ENCODE measurements at regions of chr12 and their contacts with region 1.

Region 1: DNA sequence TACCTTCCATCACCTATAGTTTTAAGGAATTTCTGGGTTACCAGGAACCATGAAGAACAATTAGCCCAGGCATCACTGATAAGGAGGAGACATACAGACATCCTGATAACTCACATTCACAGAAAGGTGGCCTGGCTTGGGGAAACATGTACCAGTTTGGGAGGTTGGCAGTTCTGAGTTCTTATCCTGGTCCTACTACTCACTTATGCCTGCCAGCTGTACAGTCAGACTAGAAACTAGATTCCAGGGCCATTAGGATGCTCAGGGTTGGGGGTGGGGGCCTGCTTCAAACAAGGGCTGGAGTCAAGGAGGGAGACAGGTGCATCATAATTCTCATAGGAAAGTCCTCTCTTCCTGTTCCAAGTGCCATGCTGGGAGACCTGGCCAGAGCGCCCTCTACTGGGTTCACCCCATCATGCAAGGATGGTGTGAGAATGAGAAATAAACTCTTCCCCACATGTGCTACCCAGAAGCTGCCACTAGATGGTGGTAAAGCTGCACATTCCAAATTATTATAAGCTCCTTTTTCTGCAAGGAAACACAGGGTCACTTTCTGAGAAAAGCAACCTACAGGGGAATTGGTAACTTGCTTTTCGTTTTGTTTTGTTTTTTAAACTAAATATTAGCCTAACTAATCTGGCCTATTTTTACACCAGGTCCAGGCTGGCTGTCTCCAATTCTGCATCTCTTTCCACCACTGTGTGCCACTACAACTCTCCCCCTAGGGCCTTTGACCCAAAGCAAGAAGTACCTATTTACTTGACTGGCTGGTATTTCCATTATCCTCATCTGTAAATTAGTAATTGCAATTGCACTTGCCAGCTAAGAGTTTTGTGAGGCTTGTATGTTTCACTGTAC is 14.5 kb downstream of the OAS2 start:
- DNase-seq: no peak
- ATAC-seq: peak; percentile 74
- H3K4me3 ChIP-seq: no peak overlapping the region
- H3K27ac ChIP-seq: no peak overlapping the region
- H3K4me1 ChIP-seq: no peaks in the 10 kb centered on the region
- H3K27me3 ChIP-seq: no peaks in the 10 kb centered on the region
- CTCF ChIP-seq: peak; percentile 81 to 99 (median 83); a peak in 5 of 6 replicates
- EP300 ChIP-seq: no peak
- POLR2A ChIP-seq: no peak
- RAD21 ChIP-seq: peak; percentile 81

Region 2: GRCh38 chr12:112906712-112907414 is 85.9 kb before region 1 on chr12 and contains the start of gene OAS1:
- CTCF ChIA-PET with region 1: interaction called, 35 read pairs
- POLR2A ChIA-PET with region 1: interaction called, 3 read pairs
- RAD21 ChIA-PET with region 1: interaction called, 19 read pairs
- SMC1A ChIA-PET with region 1: interaction called, 4 read pairs
- in situ Hi-C with region 1: no loop called
- intact Hi-C with region 1: loop called (anchors 5 kb)
- DNase-seq: peak; percentile 89
- ATAC-seq: peak; percentile 87
- H3K4me3 ChIP-seq: peak within 1 kb of the TSS; percentile 85
- H3K27ac ChIP-seq: peak within 1 kb of the TSS; percentile 93
- H3K4me1 ChIP-seq: peaks cover 22% of the 10 kb centered on the region
- H3K27me3 ChIP-seq: no peaks in the 10 kb centered on the region
- CTCF ChIP-seq: no peak
- EP300 ChIP-seq: no peak
- POLR2A ChIP-seq: peak; percentile 85
- RAD21 ChIP-seq: no peak
- polyA plus RNA-seq, gene OAS1: 88.9 to 117 TPM

Region 3: DNA sequence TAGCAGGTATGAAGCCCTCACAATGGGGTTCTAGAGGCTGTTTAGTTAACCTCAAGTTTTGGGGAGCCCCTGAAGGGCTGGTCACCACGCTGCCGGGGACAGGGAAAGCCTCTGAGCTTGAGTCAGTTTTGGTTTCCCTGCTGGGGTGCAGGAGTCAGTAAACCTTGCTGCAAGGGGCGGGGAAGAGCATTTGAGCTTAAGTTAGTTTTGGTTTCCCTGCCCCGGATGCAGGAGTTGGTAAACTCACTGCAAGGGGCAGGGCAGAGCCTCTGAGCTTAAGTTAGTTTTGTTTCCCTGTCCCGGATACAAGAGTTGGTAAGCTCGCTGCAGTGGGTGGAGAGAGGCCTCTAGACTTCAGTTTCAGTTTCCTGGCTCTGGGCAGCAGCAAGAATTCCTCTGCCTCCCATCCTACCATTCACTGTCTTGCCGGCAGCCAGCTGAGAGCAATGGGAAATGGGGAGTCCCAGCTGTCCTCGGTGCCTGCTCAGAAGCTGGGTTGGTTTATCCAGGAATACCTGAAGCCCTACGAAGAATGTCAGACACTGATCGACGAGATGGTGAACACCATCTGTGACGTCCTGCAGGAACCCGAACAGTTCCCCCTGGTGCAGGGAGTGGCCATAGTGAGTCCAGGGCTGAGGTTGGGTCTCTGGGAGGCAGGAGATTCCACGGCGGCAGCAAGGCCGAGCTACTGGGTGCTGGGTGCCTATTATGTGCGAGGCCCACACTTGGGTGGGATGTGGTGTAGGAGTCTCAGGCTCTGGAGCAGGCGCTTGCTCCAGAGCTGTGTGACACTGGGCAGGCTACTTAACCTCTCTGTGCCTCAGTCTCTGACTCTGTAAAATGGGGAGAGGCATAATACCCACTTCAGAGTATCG is 14.4 kb before region 1 on chr12 and contains the start of gene OAS2:
- CTCF ChIA-PET with region 1: interaction called, 45 read pairs
- POLR2A ChIA-PET with region 1: interaction called, 11 read pairs
- RAD21 ChIA-PET with region 1: interaction called, 22 read pairs
- SMC1A ChIA-PET with region 1: interaction called, 20 read pairs
- in situ Hi-C with region 1: no loop called
- intact Hi-C with region 1: no loop called
- DNase-seq: peak; percentile 94
- ATAC-seq: peak; percentile 92
- H3K4me3 ChIP-seq: peak within 1 kb of the TSS; percentile 97
- H3K27ac ChIP-seq: peak within 1 kb of the TSS; percentile 100
- H3K4me1 ChIP-seq: peaks cover 13% of the 10 kb centered on the region
- H3K27me3 ChIP-seq: no peaks in the 10 kb centered on the region
- CTCF ChIP-seq: no peak
- EP300 ChIP-seq: peak in 1 of 2 experiments; percentile 11; a peak in 1 of 4 replicates
- POLR2A ChIP-seq: peak; percentile 88
- RAD21 ChIP-seq: no peak
- polyA plus RNA-seq, gene OAS2: 32.4 to 43.4 TPM

Region 4: GRCh38 chr12:113005754-113006153 is 13.0 kb after region 1 on chr12:
- CTCF ChIA-PET with region 1: interaction called, 14 read pairs
- POLR2A ChIA-PET with region 1: no interaction called
- RAD21 ChIA-PET with region 1: interaction called, 3 read pairs
- SMC1A ChIA-PET with region 1: interaction called, 7 read pairs
- in situ Hi-C with region 1: no loop called
- intact Hi-C with region 1: no loop called
- DNase-seq: no peak
- ATAC-seq: no peak
- H3K4me3 ChIP-seq: no peak overlapping the region
- H3K27ac ChIP-seq: no peak overlapping the region
- H3K4me1 ChIP-seq: no peaks in the 10 kb centered on the region
- H3K27me3 ChIP-seq: no peaks in the 10 kb centered on the region
- CTCF ChIP-seq: peak; percentile 13 to 38 (median 20); a peak in 2 of 6 replicates
- EP300 ChIP-seq: no peak
- POLR2A ChIP-seq: no peak
- RAD21 ChIP-seq: 0 out of 2 replicates have a peak, but pooled peaks have one; percentile 22

Region 5: GRCh38 chr12:113030875-113031525 is 38.2 kb after region 1 on chr12:
- CTCF ChIA-PET with region 1: interaction called, 36 read pairs
- POLR2A ChIA-PET with region 1: no interaction called
- RAD21 ChIA-PET with region 1: interaction called, 11 read pairs
- SMC1A ChIA-PET with region 1: interaction called, 14 read pairs
- in situ Hi-C with region 1: no loop called
- intact Hi-C with region 1: loop called (anchors 2 kb)
- DNase-seq: no peak
- ATAC-seq: peak; percentile 84
- H3K4me3 ChIP-seq: no peak overlapping the region
- H3K27ac ChIP-seq: no peak overlapping the region
- H3K4me1 ChIP-seq: no peaks in the 10 kb centered on the region
- H3K27me3 ChIP-seq: no peaks in the 10 kb centered on the region
- CTCF ChIP-seq: peak; percentile 65 to 67 (median 65)
- EP300 ChIP-seq: no peak
- POLR2A ChIP-seq: no peak
- RAD21 ChIP-seq: peak; percentile 75

Region 6: DNA sequence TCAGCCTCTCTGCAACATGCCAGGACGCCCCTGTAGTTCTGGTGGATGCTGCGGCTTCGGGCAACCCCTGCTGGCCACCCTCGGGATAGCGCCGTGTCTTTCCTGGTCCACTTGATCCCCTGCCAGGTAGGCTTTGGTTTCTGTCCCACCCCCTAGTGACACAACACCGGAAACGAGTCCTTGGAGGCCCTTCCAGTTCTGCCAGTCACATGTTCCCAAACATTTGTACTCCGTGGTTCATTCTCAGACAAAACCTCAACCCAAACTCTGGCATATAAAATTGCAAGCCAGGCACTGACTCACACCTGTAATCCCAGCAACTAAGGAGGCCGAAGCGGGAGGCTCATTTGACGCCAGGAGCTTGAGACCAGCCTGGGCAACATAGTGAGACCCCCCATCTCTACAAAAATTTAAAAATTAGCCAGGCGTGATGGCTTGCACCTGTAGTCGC is 105.7 kb after region 1 on chr12:
- CTCF ChIA-PET with region 1: interaction called, 13 read pairs
- POLR2A ChIA-PET with region 1: no interaction called
- RAD21 ChIA-PET with region 1: interaction called, 3 read pairs
- SMC1A ChIA-PET with region 1: interaction called, 6 read pairs
- in situ Hi-C with region 1: no loop called
- intact Hi-C with region 1: loop called (anchors 5 kb)
- DNase-seq: no peak
- ATAC-seq: peak; percentile 91
- H3K4me3 ChIP-seq: no peak overlapping the region
- H3K27ac ChIP-seq: no peak overlapping the region
- H3K4me1 ChIP-seq: peaks cover 10% of the 10 kb centered on the region; the same call in 1 of the 2 replicates
- H3K27me3 ChIP-seq: no peaks in the 10 kb centered on the region
- CTCF ChIP-seq: peak; percentile 95 to 98 (median 97); a peak in 5 of 6 replicates
- EP300 ChIP-seq: no peak
- POLR2A ChIP-seq: no peak
- RAD21 ChIP-seq: peak; percentile 93

Region 7: DNA sequence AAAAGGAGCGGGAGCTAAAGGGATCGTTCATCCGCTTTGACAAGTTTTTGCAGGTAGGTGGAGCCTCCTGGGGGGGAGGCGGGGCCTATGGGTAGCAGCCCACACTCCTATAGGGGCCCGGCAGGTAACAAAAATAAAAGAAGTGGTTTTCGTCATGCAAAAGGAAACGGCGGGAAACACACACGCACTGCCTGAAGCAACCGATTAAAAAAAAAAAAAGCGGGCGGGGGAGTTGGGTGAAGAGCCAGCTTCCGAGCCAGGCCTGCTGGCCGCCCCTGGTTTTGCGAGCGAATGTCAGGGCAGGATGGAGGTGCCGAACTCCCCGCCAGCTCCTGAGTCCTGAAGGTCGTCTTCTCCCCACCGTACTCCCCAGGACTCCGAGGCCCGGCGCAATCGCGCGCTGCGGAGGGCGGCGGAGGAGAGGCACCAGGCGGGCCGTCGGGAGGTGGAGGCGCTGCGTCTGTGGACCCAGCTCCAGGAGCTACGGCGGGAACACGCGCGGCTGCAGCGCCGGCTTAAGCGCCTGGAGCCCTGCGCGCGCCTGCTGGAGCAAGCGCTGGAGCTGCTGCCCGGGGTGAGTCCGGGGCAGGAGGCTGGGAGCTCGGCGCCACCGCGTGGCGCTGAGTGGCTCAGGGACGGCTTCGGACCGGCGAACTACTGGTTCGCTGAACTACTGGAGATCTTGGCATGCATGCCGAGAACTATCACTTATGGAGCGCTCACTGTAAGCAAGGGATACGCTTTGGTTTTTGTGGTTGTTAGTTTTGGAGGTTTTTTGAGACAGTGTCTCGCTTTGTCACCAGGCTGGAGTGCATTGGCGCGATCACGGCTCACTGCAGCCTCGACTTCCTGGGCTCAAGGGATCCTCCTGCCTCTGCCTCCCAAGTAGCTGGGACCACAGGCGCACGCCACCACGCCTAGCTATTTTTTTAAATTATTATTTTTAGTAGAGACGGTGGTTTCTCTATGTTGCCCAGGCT is 160.4 kb after region 1 on chr12:
- CTCF ChIA-PET with region 1: interaction called, 31 read pairs
- POLR2A ChIA-PET with region 1: no interaction called
- RAD21 ChIA-PET with region 1: interaction called, 7 read pairs
- SMC1A ChIA-PET with region 1: interaction called, 7 read pairs
- in situ Hi-C with region 1: no loop called
- intact Hi-C with region 1: loop called (anchors 2 kb)
- DNase-seq: no peak
- ATAC-seq: peak; percentile 89
- H3K4me3 ChIP-seq: peak overlapping the region; percentile 59; the same call in 1 of the 2 replicates
- H3K27ac ChIP-seq: no peak overlapping the region
- H3K4me1 ChIP-seq: peaks cover 15% of the 10 kb centered on the region
- H3K27me3 ChIP-seq: peaks cover 7 to 8% of the 10 kb centered on the region in 2 experiments; a peak in 2 of 4 replicates
- CTCF ChIP-seq: peak; percentile 45 to 77 (median 53); a peak in 5 of 6 replicates
- EP300 ChIP-seq: no peak
- POLR2A ChIP-seq: no peak
- RAD21 ChIP-seq: peak; percentile 59

Region 8: DNA sequence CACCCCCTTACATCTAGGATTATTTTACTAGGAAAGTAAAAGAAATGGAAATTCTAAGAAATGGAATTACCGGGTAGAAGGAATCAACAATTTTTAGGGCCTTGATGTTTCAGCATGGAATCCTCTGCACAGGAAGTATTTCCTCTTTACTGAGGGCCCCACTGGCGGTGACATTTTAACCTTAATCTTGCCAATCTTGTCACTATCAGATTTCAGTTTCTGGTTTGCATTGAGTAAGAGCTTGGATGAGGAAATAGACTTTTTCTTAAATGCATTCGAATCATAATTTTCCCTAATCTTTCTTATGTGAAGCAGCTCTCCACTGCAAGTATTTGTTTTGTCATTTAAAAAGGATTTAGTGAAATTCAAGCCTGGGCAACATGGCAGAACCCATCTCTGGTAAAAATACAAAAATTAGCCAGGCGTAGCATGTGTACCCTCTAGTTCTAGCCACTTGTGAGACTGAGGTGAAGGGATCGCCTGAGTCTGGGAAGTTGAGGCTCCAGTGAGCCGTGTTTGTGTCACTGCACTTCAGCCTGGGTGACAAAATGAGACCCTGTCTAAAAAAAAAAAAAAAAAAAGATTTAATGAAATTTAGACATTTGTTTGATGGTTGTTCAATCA is 269.2 kb after region 1 on chr12:
- CTCF ChIA-PET with region 1: no interaction called
- POLR2A ChIA-PET with region 1: no interaction called
- RAD21 ChIA-PET with region 1: no interaction called
- SMC1A ChIA-PET with region 1: no interaction called
- in situ Hi-C with region 1: no loop called
- intact Hi-C with region 1: no loop called
- DNase-seq: peak; percentile 11
- ATAC-seq: peak; percentile 70
- H3K4me3 ChIP-seq: no peak overlapping the region
- H3K27ac ChIP-seq: peak overlapping the region; percentile 49
- H3K4me1 ChIP-seq: peaks cover 15% of the 10 kb centered on the region
- H3K27me3 ChIP-seq: no peaks in the 10 kb centered on the region
- CTCF ChIP-seq: no peak
- EP300 ChIP-seq: no peak
- POLR2A ChIP-seq: no peak
- RAD21 ChIP-seq: no peak

Region 9: GRCh38 chr12:113565368-113565767 is 572.6 kb after region 1 on chr12:
- CTCF ChIA-PET with region 1: no interaction called
- POLR2A ChIA-PET with region 1: no interaction called
- RAD21 ChIA-PET with region 1: no interaction called
- SMC1A ChIA-PET with region 1: no interaction called
- in situ Hi-C with region 1: no loop called
- intact Hi-C with region 1: no loop called
- DNase-seq: no peak
- ATAC-seq: no peak
- H3K4me3 ChIP-seq: no peak overlapping the region
- H3K27ac ChIP-seq: no peak overlapping the region
- H3K4me1 ChIP-seq: no peaks in the 10 kb centered on the region
- H3K27me3 ChIP-seq: peaks cover 0 to 2% of the 10 kb centered on the region in 2 experiments; a peak in 2 of 4 replicates
- CTCF ChIP-seq: no peak
- EP300 ChIP-seq: no peak
- POLR2A ChIP-seq: no peak
- RAD21 ChIP-seq: no peak